IMR-90 (cell line): ENCODE measurements at regions of chr11 and their contacts with region 1.

Region 1: GRCh38 chr11:68312117-68312779 is at the start of gene LRP5:
- DNase-seq: peak; percentile 10
- ATAC-seq: peak; percentile 60
- H3K4me3 ChIP-seq: peak within 1 kb of the TSS; percentile 64
- H3K27ac ChIP-seq: peak within 1 kb of the TSS; percentile 19
- H3K4me1 ChIP-seq: peaks cover 13% of the 10 kb centered on the region
- H3K27me3 ChIP-seq: no peaks in the 10 kb centered on the region
- CTCF ChIP-seq: no peak
- POLR2A ChIP-seq: no peak
- RAD21 ChIP-seq: no peak
- total RNA-seq, gene LRP5: 10.4 and 11.1 TPM in 2 replicates

Region 2: GRCh38 chr11:68223275-68223674 is 89.0 kb before region 1 on chr11:
- CTCF ChIA-PET with region 1: no interaction called
- POLR2A ChIA-PET with region 1: no interaction called
- dilution Hi-C with region 1: no loop called
- in situ Hi-C with region 1: no loop called
- intact Hi-C with region 1: no loop called
- DNase-seq: no peak
- ATAC-seq: no peak
- H3K4me3 ChIP-seq: no peak overlapping the region
- H3K27ac ChIP-seq: no peak overlapping the region
- H3K4me1 ChIP-seq: no peaks in the 10 kb centered on the region
- H3K27me3 ChIP-seq: peaks cover 23% of the 10 kb centered on the region
- CTCF ChIP-seq: no peak
- POLR2A ChIP-seq: no peak
- RAD21 ChIP-seq: no peak

Region 3: GRCh38 chr11:68354148-68354872 is 42.1 kb after region 1 on chr11:
- CTCF ChIA-PET with region 1: no interaction called
- POLR2A ChIA-PET with region 1: no interaction called
- dilution Hi-C with region 1: no loop called
- in situ Hi-C with region 1: no loop called
- intact Hi-C with region 1: loop called (anchors 1 kb)
- DNase-seq: peak; percentile 89
- ATAC-seq: peak; percentile 83
- H3K4me3 ChIP-seq: no peak overlapping the region
- H3K27ac ChIP-seq: peak overlapping the region; percentile 86
- H3K4me1 ChIP-seq: peaks cover 18% of the 10 kb centered on the region
- H3K27me3 ChIP-seq: no peaks in the 10 kb centered on the region
- CTCF ChIP-seq: no peak
- POLR2A ChIP-seq: no peak
- RAD21 ChIP-seq: no peak

Region 4: GRCh38 chr11:68546555-68546954 is 234.3 kb after region 1 on chr11:
- CTCF ChIA-PET with region 1: no interaction called
- POLR2A ChIA-PET with region 1: no interaction called
- dilution Hi-C with region 1: no loop called
- in situ Hi-C with region 1: no loop called
- intact Hi-C with region 1: no loop called
- DNase-seq: peak; percentile 47
- ATAC-seq: no peak
- H3K4me3 ChIP-seq: no peak overlapping the region
- H3K27ac ChIP-seq: no peak overlapping the region
- H3K4me1 ChIP-seq: peaks cover 11% of the 10 kb centered on the region
- H3K27me3 ChIP-seq: no peaks in the 10 kb centered on the region
- CTCF ChIP-seq: no peak
- POLR2A ChIP-seq: no peak
- RAD21 ChIP-seq: no peak